ENCODE measurements at regions of chrX and their contacts with region 1.

Region 1: GRCh38 chrX:34058005-34058404 is 74.1 kb downstream of the FAM47A start:
- DNase-seq: no peak
- ATAC-seq: no peak
- H3K4me3 ChIP-seq: no peak overlapping the region
- H3K27ac ChIP-seq: no peak overlapping the region
- H3K4me1 ChIP-seq: no peaks in the 10 kb centered on the region
- H3K27me3 ChIP-seq: no peaks in the 10 kb centered on the region
- CTCF ChIP-seq: no peak
- EP300 ChIP-seq: no peak
- POLR2A ChIP-seq: no peak
- RAD21 ChIP-seq: no peak

Region 2: GRCh38 chrX:34028488-34028887 is 29.5 kb before region 1 on chrX:
- CTCF ChIA-PET with region 1: no interaction called
- POLR2A ChIA-PET with region 1: no interaction called
- in situ Hi-C with region 1: no loop called
- intact Hi-C with region 1: no loop called
- DNase-seq: no peak
- ATAC-seq: no peak
- H3K4me3 ChIP-seq: no peak overlapping the region
- H3K27ac ChIP-seq: no peak overlapping the region
- H3K4me1 ChIP-seq: no peaks in the 10 kb centered on the region
- H3K27me3 ChIP-seq: no peaks in the 10 kb centered on the region
- CTCF ChIP-seq: no peak
- EP300 ChIP-seq: no peak
- POLR2A ChIP-seq: no peak
- RAD21 ChIP-seq: no peak

Region 3: DNA sequence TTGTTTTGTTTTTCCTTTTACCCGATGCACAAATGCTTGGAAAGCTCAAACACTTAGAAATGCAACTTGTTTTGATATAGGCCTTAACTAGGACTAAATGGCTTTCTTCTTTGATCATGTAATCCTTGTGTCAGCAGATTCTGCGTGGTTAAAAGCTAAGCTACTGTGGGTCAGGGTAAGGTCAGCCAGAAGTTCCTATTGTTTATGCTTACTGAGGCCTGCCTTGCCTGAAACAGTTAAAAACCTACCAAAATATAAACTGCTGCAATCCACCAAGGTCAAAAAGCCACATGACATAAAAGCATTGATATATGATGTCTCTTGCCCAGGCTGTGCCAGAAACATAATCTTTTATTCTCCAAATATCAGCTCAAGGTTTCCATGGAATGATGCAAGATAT is 1108.0 kb after region 1 on chrX:
- CTCF ChIA-PET with region 1: no interaction called
- POLR2A ChIA-PET with region 1: no interaction called
- in situ Hi-C with region 1: loop called (anchors 10 kb)
- intact Hi-C with region 1: no loop called
- DNase-seq: no peak
- ATAC-seq: no peak
- H3K4me3 ChIP-seq: no peak overlapping the region
- H3K27ac ChIP-seq: no peak overlapping the region
- H3K4me1 ChIP-seq: no peaks in the 10 kb centered on the region
- H3K27me3 ChIP-seq: no peaks in the 10 kb centered on the region
- CTCF ChIP-seq: no peak
- EP300 ChIP-seq: no peak
- POLR2A ChIP-seq: no peak
- RAD21 ChIP-seq: no peak